ENCODE measurements at regions of chr13 and their contacts with region 1.

Region 1: GRCh38 chr13:74990992-74991391 is 491.0 kb downstream of the TBC1D4 start:
- DNase-seq: no peak

Region 2: GRCh38 chr13:74860789-74861188 is 130.2 kb before region 1 on chr13:
- intact Hi-C with region 1: no loop called
- DNase-seq: no peak

Region 3: GRCh38 chr13:74966814-74967424 is 24.1 kb before region 1 on chr13:
- intact Hi-C with region 1: no loop called
- DNase-seq: no peak

Region 4: GRCh38 chr13:75651013-75651412 is 660.0 kb after region 1 on chr13:
- intact Hi-C with region 1: loop called in 1 of 2 experiments (anchors 5 kb)
- DNase-seq: no peak

Region 5: GRCh38 chr13:75726306-75726705 is 735.3 kb after region 1 on chr13:
- intact Hi-C with region 1: no loop called
- DNase-seq: no peak